Thyroid gland (tissue), 4 donors: ENCODE measurements at regions of chr7 and their contacts with region 1.

Region 1: DNA sequence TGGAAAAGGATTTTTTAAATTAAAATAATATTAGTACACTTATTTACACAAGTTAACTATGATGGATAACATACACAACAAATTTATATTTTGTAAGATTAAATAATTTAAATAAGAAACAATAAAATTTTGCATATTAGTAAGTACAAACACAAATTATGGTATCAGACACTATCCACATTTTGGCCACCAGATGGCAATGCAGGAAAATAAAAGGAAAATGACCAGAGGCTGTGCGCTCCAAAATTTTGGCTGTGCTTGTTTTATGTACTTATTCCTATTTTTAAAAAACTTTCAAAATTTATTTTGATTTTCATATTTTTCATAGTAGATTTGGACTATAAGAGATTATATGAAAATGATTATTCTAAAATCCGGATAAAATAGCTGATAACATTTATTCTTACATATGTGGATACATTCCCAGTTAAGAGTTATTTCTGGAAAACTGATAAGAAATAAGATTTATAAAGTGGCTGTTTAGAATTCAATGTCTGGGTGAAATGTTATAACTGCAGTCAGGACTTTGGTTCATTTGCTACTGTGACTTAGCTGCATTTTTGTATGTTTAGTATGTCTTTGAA is 274.7 kb upstream of the HGF start:
- DNase-seq: peak; percentile 35 to 40
- H3K4me3 ChIP-seq: no peak overlapping the region
- H3K27ac ChIP-seq: no peak overlapping the region
- H3K4me1 ChIP-seq: no peaks in the 10 kb centered on the region
- H3K27me3 ChIP-seq: no peaks in the 10 kb centered on the region
- CTCF ChIP-seq: peak in 5 of 6 experiments; percentile 47 to 76 (median 69)
- POLR2A ChIP-seq: no peak

Region 2: GRCh38 chr7:82572195-82572880 is 527.7 kb after region 1 on chr7:
- intact Hi-C with region 1: loop called (anchors 10 kb)
- DNase-seq: peak; percentile 86 to 91
- H3K4me3 ChIP-seq: no peak overlapping the region
- H3K27ac ChIP-seq: no peak overlapping the region
- H3K4me1 ChIP-seq: peaks cover 0 to under 1% of the 10 kb centered on the region in 2 donors
- H3K27me3 ChIP-seq: no peaks in the 10 kb centered on the region
- CTCF ChIP-seq: peak; percentile 64 to 92 (median 82)
- POLR2A ChIP-seq: no peak